A549 (cell line): ENCODE measurements at regions of chr1 and their contacts with region 1.

Region 1: GRCh38 chr1:175146529-175147213 is 45.9 kb downstream of the KIAA0040 start:
- DNase-seq: peak; percentile 60 to 80
- ATAC-seq: peak; percentile 92 to 98
- H3K4me3 ChIP-seq: peak overlapping the region; percentile 20; the same call in 1 of the 3 replicates
- H3K27ac ChIP-seq: no peak overlapping the region
- H3K4me1 ChIP-seq: 0 out of 3 replicates have a peak, but pooled peaks cover 5% of the 10 kb centered on the region
- CTCF ChIP-seq: peak; percentile 74
- EP300 ChIP-seq: no peak
- POLR2A ChIP-seq: no peak
- RAD21 ChIP-seq: peak; percentile 32 to 42; a peak in 1 of 5 replicates

Region 2: DNA sequence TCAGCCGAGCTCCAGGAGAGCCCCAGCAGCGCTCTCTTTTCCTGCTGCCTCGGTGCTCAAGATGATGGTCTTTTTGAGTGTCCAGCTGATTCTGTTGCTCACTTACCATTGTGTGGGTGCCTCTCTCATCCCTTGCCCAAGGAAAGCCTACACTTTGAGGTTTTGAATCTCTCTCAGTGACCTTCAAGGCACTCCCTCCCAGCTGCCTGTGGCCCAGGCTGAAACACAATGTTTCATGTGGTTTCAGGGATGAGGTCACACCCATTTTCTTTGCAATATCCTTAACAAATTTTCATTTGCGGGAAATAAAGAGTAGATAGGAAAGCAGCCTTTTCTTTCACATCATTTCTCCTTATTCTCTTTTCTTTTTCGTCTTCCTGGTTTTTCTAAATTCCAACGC is 110.8 kb before region 1 on chr1:
- CTCF ChIA-PET with region 1: interaction called, 54 read pairs
- POLR2A ChIA-PET with region 1: no interaction called
- DNase-seq: no peak
- ATAC-seq: no peak
- H3K4me3 ChIP-seq: no peak overlapping the region
- H3K27ac ChIP-seq: no peak overlapping the region
- H3K4me1 ChIP-seq: no peaks in the 10 kb centered on the region
- CTCF ChIP-seq: no peak
- EP300 ChIP-seq: no peak
- POLR2A ChIP-seq: no peak
- RAD21 ChIP-seq: no peak

Region 3: GRCh38 chr1:175079338-175079737 is 67.3 kb before region 1 on chr1:
- CTCF ChIA-PET with region 1: no interaction called
- POLR2A ChIA-PET with region 1: no interaction called
- DNase-seq: no peak
- ATAC-seq: no peak
- H3K4me3 ChIP-seq: no peak overlapping the region
- H3K27ac ChIP-seq: no peak overlapping the region
- H3K4me1 ChIP-seq: no peaks in the 10 kb centered on the region
- CTCF ChIP-seq: no peak
- EP300 ChIP-seq: no peak
- POLR2A ChIP-seq: no peak
- RAD21 ChIP-seq: no peak

Region 4: DNA sequence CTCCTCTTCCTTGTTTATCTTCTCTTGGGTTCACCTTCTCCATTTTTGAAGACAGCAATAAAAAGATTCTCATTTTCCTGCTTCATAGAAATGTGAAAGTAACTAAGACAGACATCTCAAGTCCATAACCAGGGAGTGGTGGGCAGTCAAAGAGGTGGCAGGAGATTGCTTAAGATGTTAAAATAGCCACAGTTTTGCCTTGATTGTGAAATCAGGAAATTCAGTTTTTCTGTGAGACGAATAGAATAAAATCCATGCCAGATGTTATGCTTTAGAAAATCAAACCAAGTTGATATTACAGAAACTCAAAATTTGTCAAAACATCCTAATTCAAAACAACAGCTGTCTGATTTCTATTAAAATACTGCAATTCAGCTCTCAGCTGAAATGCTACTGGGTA is 21.8 kb before region 1 on chr1:
- CTCF ChIA-PET with region 1: interaction called, 20 read pairs
- POLR2A ChIA-PET with region 1: no interaction called
- DNase-seq: no peak
- ATAC-seq: no peak
- H3K4me3 ChIP-seq: no peak overlapping the region
- H3K27ac ChIP-seq: no peak overlapping the region
- H3K4me1 ChIP-seq: no peaks in the 10 kb centered on the region
- CTCF ChIP-seq: no peak
- EP300 ChIP-seq: no peak
- POLR2A ChIP-seq: no peak
- RAD21 ChIP-seq: no peak

Region 5: DNA sequence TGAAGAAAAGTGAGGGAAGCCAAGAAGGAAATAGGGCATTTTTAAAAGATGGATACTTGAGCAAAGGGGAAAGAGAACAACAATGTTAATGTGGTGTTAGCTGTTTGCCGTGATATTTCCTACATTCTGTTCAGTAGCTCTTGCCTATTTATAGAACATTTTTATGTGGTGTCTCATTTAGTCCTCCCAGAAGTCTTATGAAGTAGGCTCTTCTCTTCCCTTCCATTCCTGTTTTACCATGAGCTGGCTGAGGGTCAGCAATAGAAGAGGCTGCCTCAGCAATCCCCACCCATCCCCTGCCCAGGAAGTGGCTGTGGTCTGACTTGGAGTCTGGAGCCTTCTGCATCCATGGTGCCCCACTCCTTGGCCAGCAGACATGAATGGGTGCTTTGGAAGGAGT is 14.2 kb before region 1 on chr1:
- CTCF ChIA-PET with region 1: interaction called, 36 read pairs
- POLR2A ChIA-PET with region 1: no interaction called
- DNase-seq: no peak
- ATAC-seq: no peak
- H3K4me3 ChIP-seq: no peak overlapping the region
- H3K27ac ChIP-seq: no peak overlapping the region
- H3K4me1 ChIP-seq: no peaks in the 10 kb centered on the region
- CTCF ChIP-seq: no peak
- EP300 ChIP-seq: no peak
- POLR2A ChIP-seq: no peak
- RAD21 ChIP-seq: no peak

Region 6: DNA sequence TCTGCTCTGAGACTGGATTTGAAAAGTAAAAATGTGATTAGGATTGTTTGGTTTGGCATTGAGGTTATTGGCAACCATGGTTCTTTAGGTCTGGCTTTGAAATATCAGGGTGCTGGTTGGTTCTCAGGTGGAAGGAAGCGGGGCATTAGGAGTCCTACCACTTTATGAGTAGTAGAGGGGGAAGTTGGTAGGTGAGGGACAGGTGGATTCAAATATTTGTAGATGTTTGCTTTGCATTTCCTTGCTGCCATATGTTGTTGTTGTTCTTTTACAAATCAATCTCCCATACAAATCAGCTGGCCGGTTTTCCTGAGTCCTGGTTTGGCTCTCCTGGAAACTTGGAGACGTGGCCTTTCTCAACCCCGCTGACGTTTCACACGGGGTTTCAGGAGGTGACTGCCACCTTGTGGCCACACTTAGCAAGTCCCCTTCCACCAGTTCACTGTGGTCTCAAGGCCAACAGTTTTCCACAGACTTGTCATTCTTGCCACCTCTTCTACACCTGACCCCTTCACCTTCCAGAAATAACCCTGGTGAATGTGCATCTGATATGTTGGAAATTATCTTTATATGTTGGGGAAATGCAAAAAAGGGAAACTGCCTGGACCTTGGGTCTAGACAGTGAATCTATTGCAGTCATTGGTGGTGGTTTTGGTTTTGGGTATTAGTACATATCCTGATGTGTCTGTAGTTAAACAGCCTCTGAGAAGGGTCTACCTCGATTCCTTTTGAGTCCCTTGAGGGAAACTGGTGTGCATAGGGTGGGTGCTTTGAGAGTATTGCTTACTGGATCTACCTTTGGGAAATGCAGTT is 173.0 kb after region 1 on chr1:
- CTCF ChIA-PET with region 1: interaction called, 100 read pairs
- POLR2A ChIA-PET with region 1: no interaction called
- DNase-seq: peak; percentile 59 to 71
- ATAC-seq: peak; percentile 89 to 98
- H3K4me3 ChIP-seq: no peak overlapping the region
- H3K27ac ChIP-seq: no peak overlapping the region
- H3K4me1 ChIP-seq: no peaks in the 10 kb centered on the region
- CTCF ChIP-seq: peak; percentile 75
- EP300 ChIP-seq: no peak
- POLR2A ChIP-seq: no peak
- RAD21 ChIP-seq: peak; percentile 66 to 76

Region 7: DNA sequence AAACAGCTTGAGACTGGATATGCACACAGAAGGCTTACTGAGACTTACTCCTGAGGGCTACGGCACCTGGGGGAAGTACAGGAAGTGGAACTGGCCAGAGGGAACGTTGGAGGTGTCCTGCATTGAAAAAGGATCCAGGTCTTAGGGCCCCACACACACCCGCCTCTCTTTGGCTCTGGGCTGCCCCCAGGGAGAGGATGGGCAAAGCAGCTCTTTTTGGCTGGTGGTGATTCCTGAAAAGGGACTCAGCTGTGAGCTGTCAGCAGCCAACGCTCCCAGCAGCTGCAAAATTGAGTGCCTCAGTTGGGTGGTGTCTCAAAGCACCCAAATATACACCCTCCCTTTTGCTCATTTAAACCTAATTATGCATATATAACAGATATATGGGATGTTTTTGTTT is 383.5 kb after region 1 on chr1:
- CTCF ChIA-PET with region 1: no interaction called
- POLR2A ChIA-PET with region 1: no interaction called
- DNase-seq: no peak
- ATAC-seq: no peak
- H3K4me3 ChIP-seq: no peak overlapping the region
- H3K27ac ChIP-seq: no peak overlapping the region
- H3K4me1 ChIP-seq: no peaks in the 10 kb centered on the region
- CTCF ChIP-seq: no peak
- EP300 ChIP-seq: no peak
- POLR2A ChIP-seq: no peak
- RAD21 ChIP-seq: no peak